ENCODE measurements at regions of chr1 and their contacts with region 1.

Region 1: DNA sequence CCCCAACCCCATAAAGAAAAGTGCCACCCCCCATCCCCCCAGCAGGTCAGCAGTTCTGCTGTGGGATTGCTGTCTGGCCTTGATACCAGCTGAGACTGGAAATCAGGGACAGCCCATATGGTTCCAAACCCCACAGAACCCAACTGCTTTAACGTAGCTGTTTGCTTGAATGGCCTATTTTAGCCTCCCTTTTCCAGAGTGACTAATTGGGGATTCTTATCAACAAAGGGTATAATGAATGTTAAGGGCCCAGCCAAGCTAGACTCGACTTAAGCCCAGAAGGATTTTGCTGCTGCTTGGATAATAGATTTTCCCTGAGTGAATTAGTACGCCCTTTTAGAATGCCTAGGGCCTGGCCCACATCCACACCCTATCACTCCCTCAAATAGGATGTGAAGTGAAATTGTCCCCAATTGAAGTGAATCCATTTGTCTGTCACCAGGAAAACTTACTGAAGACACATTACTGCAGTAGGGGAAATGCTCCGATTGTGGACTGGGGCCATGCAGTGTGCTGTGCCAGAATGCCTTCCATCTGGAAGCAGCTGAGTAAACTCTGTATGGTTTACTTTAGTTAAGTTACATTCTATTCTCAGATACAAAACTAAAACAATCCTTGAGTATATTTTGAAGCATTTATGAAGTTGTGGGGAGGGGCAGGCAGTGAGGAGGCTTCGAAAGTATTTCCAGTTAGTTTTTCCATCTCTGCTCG is 156.9 kb downstream of the DHRS3 start:
- DNase-seq: no peak
- H3K4me3 ChIP-seq: no peak overlapping the region
- CTCF ChIP-seq: no peak

Region 2: GRCh38 chr1:12475947-12476346 is 14.9 kb after region 1 on chr1:
- CTCF ChIA-PET with region 1: interaction called, 15 read pairs
- POLR2A ChIA-PET with region 1: interaction called, 3 read pairs
- DNase-seq: no peak
- H3K4me3 ChIP-seq: no peak overlapping the region
- CTCF ChIP-seq: no peak

Region 3: GRCh38 chr1:12528021-12528852 is 67.2 kb after region 1 on chr1:
- CTCF ChIA-PET with region 1: no interaction called
- POLR2A ChIA-PET with region 1: no interaction called
- DNase-seq: no peak
- H3K4me3 ChIP-seq: no peak overlapping the region
- CTCF ChIP-seq: no peak

Region 4: GRCh38 chr1:12745992-12746323 is 284.9 kb after region 1 on chr1 and contains the start of gene CFAP107:
- CTCF ChIA-PET with region 1: no interaction called
- POLR2A ChIA-PET with region 1: no interaction called
- DNase-seq: no peak
- H3K4me3 ChIP-seq: no peak within 1 kb of the TSS
- CTCF ChIP-seq: no peak